Posterior vena cava (tissue), 2 donors: ENCODE measurements at regions of chr20 and their contacts with region 1.

Region 1: DNA sequence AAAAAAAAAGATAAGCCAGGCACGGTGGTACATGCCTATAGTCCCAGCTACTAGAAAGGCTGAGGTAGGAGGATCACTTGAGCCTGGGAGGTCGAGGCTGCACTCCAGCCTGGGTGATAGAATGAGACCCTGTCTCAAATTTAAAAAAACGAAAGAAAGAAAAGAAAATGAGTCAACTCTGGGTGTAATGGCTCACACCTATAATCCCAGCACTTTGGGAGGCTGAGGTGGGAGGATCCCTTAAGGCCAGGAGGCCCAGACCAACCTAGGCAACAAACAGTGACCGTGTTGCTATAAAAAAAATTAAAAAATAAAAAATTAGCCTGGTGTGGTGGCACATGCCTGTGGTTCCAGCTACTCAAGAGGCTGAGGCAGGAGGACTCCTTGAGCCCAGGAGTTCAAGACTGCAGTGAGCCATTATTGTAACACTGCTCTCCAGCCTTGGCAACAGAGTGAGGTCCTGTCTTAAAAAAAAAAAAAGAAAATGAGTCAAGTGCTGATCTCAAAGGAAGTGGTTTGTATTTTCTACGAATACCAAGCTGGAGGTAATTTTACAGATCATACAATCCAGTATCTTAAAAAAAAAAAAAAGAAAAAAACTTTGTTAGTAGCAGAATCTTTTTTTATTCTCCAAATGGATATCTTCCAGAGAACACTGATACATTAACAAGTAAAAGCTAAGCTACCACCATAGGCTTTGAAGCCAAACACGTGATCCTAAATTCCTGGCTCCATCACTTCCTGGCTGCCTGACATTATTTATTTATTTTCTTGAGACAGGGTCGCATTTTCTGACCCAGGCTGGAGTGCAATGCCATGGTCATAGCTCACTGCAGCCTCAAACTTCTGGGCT is 5.7 kb downstream of the COMMD7 start:
- DNase-seq: no peak

Region 2: DNA sequence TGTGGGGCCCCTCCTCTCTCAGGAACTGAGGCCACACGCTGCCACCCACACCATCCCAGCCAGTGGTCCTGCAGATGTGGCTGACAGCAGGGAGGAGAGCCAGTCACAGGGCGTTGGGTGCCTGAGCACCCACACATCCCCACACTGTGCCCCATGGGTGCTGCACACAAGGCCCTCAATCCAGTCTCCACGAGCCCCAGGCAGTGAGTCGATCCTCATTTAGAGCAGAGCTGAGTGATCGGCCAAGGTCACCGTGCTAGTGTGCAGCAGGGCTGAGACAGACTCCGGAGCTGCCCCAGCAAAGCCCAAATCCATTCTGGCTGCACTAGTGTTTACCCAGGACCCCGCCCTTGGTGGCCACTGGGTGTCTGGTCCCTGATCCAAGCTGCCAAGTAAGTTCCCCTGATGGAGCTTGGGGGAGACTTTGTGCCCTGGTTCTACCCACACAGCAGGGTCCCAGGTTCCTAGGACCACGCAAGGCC is 72.9 kb before region 1 on chr20:
- intact Hi-C with region 1: loop called in 1 of 2 experiments (anchors 2 kb)
- DNase-seq: no peak

Region 3: DNA sequence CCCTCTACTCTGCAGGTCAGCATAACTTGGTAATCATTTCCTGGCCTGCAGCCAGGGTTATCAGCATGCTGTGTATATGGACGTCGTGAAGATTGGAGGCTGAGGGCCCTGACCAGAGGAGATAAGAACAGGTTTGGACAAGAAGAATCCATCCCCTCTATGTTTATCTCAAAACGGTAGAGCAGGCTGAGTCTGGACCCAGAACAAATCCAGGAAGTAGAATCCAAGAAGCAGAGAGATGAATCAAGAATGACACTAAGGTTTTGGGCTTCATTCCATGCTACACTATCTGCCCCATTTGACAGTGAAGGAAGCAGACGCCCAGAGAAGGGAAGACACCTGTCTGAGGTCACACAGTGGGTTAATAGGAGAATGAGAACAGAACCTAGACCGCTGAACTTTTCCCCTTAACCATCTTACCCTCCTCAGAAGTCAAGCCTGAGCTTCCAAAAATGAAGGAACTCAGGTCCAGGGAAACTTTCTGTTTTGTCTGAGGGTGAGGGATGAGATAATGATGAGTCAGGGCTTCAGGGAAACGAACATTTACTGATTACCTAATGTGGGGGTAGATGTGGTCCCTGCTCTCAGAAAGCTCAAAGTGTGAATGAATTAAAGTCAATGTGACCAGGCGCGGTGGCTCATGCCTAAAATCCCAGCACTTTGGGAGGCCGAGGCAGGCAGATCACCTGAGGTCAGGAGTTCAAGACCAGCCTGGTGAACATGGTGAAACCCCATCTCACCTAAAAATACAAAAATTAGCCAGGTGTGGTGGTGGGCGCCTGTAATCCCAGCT is 15.1 kb after region 1 on chr20:
- intact Hi-C with region 1: no loop called
- DNase-seq: no peak